ENCODE measurements at regions of chr3 and their contacts with region 1.

Region 1: GRCh38 chr3:140128631-140129030 is 193.6 kb downstream of the CLSTN2 start:
- DNase-seq: peak; percentile 15 to 23
- ATAC-seq: peak in 6 of 8 donors; percentile 38 to 74 (median 60)
- H3K4me3 ChIP-seq: no peak overlapping the region
- H3K27ac ChIP-seq: no peak overlapping the region
- H3K4me1 ChIP-seq: no peaks in the 10 kb centered on the region
- H3K27me3 ChIP-seq: peaks cover 0 to 5% (median 0%) of the 10 kb centered on the region in 7 donors
- CTCF ChIP-seq: peak in 7 of 9 donors; percentile 45 to 57 (median 53)

Region 2: GRCh38 chr3:140216249-140216648 is 87.6 kb after region 1 on chr3:
- intact Hi-C with region 1: loop called in 1 of 10 experiments (anchors 5 kb)
- DNase-seq: no peak
- ATAC-seq: peak in 1 of 8 donors; percentile 41
- H3K4me3 ChIP-seq: no peak overlapping the region
- H3K27ac ChIP-seq: no peak overlapping the region
- H3K4me1 ChIP-seq: no peaks in the 10 kb centered on the region
- H3K27me3 ChIP-seq: no peaks in the 10 kb centered on the region
- CTCF ChIP-seq: peak in 7 of 9 donors; percentile 28 to 51 (median 47)